ENCODE measurements at regions of chr11 and their contacts with region 1.

Region 1: DNA sequence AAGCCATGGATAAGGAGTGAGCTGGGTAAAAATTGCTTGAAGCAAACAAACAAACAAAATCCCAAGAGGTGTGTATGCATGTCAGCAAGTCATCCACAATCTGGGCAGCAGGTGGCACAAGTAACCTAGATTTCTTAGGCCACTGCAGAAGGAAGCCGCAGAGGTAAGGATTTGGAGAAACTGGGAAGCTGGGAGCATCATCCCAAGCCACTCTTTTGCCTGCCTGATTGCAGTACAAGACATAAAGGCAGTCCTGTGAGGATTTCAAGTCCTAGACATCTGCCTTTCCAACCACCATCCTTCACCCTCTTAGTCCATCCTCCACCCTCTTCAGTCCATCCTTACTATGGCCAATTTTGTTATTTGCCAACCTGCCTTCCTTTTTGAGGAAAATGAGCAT is 67.2 kb upstream of the BMAL1 start:
- DNase-seq: peak; percentile 81
- H3K4me3 Mint-ChIP-seq: no peak overlapping the region
- H3K27ac Mint-ChIP-seq: no peak overlapping the region
- H3K4me1 Mint-ChIP-seq: peaks cover 27% of the 10 kb centered on the region
- H3K27me3 Mint-ChIP-seq: no peaks in the 10 kb centered on the region
- CTCF ChIP-seq: peak; percentile 84

Region 2: GRCh38 chr11:12331239-12331874 is 879.1 kb before region 1 on chr11:
- CTCF ChIA-PET with region 1: interaction called, 5 read pairs
- POLR2A ChIA-PET with region 1: no interaction called
- intact Hi-C with region 1: loop called (anchors 5 kb)
- DNase-seq: peak; percentile 90
- H3K4me3 Mint-ChIP-seq: no peak overlapping the region
- H3K27ac Mint-ChIP-seq: no peak overlapping the region
- H3K4me1 Mint-ChIP-seq: peaks cover 4% of the 10 kb centered on the region
- H3K27me3 Mint-ChIP-seq: no peaks in the 10 kb centered on the region
- CTCF ChIP-seq: peak; percentile 89

Region 3: GRCh38 chr11:13229711-13230318 is 19.4 kb after region 1 on chr11:
- CTCF ChIA-PET with region 1: interaction called, 12 read pairs
- POLR2A ChIA-PET with region 1: interaction called, 6 read pairs
- intact Hi-C with region 1: no loop called
- DNase-seq: no peak
- H3K4me3 Mint-ChIP-seq: no peak overlapping the region
- H3K27ac Mint-ChIP-seq: no peak overlapping the region
- H3K4me1 Mint-ChIP-seq: peaks cover 6% of the 10 kb centered on the region
- H3K27me3 Mint-ChIP-seq: no peaks in the 10 kb centered on the region
- CTCF ChIP-seq: no peak

Region 4: DNA sequence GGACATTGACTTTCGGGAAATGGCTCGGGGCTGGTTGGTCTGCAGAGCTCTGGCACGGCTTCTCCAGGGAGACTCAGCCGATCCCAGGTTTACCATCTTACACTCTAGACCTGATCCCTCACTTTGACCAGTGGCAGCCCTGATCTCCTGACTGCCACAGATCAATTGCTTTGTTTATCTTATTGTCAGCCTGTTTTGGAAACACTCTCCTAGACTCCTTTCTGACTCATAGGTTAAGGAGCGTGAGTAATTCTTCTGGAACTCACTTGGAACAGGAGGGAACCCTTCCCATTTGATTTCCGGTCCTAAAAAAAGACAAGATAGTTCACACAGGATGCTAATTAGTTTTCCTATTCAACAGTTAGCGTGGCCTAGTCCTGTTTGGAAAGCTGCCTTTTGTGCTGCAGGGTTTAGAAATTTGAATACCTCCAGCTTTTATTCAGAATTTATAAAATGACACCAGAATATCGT is 51.2 kb after region 1 on chr11:
- CTCF ChIA-PET with region 1: interaction called, 9 read pairs
- POLR2A ChIA-PET with region 1: interaction called, 18 read pairs
- intact Hi-C with region 1: no loop called
- DNase-seq: peak; percentile 94
- H3K4me3 Mint-ChIP-seq: peak overlapping the region; percentile 62
- H3K27ac Mint-ChIP-seq: peak overlapping the region; percentile 99
- H3K4me1 Mint-ChIP-seq: peaks cover 57% of the 10 kb centered on the region
- H3K27me3 Mint-ChIP-seq: no peaks in the 10 kb centered on the region
- CTCF ChIP-seq: no peak

Region 5: DNA sequence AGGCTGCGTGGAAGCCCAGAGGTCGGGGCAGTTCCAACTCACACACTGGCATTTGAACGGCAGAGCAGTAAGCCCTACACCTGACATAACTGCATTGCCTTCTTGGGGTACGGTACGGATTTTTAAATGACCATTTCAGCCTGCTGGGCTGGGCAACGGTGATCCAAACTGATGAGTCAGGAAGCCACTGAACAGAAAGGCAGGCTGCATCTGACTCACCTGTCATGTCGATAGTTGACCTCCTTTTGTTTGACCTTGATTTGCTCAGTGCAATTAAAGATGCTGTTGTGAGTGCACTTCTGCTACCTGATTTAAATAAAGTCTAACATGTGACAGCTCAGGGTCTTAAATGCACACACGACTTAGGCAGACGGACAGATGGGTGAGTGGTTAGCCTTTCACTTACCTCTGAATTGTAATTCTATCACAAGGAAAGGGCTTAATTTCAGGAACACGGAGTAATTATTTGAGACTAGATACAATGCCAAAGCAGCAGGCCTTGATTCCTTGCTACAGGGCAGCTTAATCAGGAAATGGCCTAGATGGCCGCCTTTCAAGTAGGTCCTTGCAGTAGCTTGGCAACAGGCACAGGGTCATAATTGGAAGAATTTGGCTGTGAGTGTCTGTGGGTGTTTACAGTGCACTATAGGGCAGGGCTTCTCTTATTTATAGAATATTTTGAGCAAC is 119.4 kb after region 1 on chr11:
- CTCF ChIA-PET with region 1: interaction called, 311 read pairs
- POLR2A ChIA-PET with region 1: interaction called, 59 read pairs
- intact Hi-C with region 1: loop called (anchors 1 kb)
- DNase-seq: peak; percentile 62
- H3K4me3 Mint-ChIP-seq: no peak overlapping the region
- H3K27ac Mint-ChIP-seq: peak overlapping the region; percentile 8
- H3K4me1 Mint-ChIP-seq: peaks cover 44% of the 10 kb centered on the region
- H3K27me3 Mint-ChIP-seq: no peaks in the 10 kb centered on the region
- CTCF ChIP-seq: no peak

Region 6: DNA sequence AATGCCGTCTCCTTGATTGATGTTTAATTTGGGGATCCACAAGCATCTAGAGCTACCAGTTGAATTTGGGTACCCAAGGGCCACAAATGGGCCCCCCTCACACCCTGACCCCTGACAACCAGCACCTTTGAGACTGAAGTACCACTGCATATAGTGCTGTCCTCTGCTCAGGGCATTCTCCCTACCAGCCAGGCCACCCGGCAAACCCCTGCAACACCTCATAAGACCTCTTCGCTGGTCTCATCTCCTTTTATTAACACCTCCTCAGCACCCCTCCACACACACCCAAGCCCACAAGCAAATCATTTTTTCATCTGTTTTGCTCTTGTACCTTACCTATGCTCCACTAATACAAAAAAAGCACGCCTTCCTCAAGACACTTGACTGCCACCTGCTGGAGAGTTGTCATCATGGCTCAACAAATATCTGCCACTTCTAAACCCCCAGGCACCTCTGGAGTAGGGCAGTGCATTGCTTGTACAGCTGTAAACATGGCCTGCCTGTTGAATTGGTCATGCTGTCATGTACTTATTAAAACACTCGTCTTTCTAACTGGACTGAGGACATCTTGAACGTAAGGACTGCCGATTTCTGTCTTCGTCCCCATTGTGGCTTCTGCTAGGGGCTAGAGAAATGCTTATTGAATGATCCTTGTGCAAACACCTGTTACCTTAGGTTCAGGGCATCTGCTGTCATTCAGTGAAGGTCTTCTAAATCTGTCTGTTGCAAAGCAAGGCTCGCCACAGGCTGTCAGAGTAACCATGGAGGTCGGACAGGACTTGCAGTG is 133.7 kb after region 1 on chr11:
- CTCF ChIA-PET with region 1: interaction called, 311 read pairs
- POLR2A ChIA-PET with region 1: interaction called, 59 read pairs
- intact Hi-C with region 1: loop called (anchors 1 kb)
- DNase-seq: peak; percentile 86
- H3K4me3 Mint-ChIP-seq: no peak overlapping the region
- H3K27ac Mint-ChIP-seq: no peak overlapping the region
- H3K4me1 Mint-ChIP-seq: peaks cover 30% of the 10 kb centered on the region
- H3K27me3 Mint-ChIP-seq: no peaks in the 10 kb centered on the region
- CTCF ChIP-seq: peak; percentile 70

Region 7: DNA sequence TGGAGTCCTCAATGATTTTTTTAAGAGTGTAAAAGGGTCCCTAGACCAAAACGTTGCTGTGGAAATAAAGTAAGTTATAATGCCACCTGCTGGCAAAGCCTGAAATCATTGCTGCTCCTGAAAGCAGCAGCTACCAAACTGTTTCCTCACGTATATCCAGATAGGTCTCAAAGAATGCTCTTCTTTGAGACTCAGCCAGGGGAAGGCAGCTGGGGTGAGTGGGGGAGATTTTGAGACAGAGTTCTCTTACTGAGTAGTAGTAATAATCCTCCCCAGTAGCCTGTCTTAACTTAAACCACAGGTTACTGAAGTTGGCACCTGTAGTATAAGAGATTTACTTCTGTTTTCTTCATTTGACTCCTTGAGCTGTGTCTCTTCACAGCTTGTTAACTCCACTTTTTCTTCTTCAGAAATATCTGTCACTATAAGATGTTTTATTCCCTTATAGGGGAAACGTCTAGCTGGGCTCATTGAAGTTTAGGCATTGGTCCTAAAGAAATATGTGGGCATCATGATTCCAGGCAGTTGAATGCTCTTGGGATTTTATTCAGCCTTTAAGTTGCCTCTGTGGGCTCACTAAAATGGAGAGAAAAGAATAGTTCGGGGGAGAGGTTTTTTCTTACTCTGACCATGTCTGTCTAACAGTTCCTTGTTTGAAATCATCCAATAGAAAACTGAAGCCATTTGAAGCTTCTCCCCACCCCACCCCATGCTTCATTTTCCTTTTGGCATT is 174.7 kb after region 1 on chr11:
- CTCF ChIA-PET with region 1: interaction called, 60 read pairs
- POLR2A ChIA-PET with region 1: interaction called, 11 read pairs
- intact Hi-C with region 1: loop called (anchors 1 kb)
- DNase-seq: peak; percentile 34
- H3K4me3 Mint-ChIP-seq: no peak overlapping the region
- H3K27ac Mint-ChIP-seq: no peak overlapping the region
- H3K4me1 Mint-ChIP-seq: no peaks in the 10 kb centered on the region
- H3K27me3 Mint-ChIP-seq: no peaks in the 10 kb centered on the region
- CTCF ChIP-seq: peak; percentile 58

Measured in MCF 10A (cell line).